OCI-LY7 (cell line): ENCODE measurements at regions of chr11 and their contacts with region 1.

Region 1: DNA sequence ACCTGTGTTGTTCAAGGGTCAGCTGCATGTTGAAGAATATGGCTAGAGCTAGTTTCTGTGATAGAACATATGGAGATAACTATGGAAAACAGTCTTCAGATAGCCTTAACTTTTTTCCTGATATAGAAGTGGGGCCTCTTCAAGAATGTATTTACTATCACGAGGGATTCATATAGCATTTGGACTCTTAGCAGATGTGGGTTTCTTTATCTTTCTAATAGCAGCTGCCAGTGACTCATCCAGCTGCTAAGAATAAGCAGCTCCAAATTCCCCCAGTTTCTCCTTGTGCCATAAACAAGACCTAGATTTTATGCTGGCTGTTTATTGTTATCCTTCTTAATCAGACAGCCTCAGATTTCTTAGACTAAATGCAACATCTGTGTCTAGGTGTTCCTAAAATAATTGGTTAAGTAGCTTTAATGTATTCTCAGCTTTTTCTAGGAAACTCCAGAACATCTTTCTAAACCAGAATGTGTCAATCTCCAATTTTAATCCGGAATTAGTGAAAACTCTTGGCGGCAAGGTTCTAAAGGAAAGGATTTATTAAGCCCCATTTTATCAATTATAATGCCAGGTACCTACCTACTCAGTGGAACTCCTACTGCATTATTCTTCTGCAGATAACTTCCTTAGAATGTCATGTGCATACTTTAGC is 119.8 kb downstream of the CSTPP1 start:
- DNase-seq: no peak
- H3K4me3 ChIP-seq: no peak overlapping the region
- H3K27ac ChIP-seq: no peak overlapping the region
- H3K4me1 ChIP-seq: peaks cover 23% of the 10 kb centered on the region
- CTCF ChIP-seq: no peak

Region 2: DNA sequence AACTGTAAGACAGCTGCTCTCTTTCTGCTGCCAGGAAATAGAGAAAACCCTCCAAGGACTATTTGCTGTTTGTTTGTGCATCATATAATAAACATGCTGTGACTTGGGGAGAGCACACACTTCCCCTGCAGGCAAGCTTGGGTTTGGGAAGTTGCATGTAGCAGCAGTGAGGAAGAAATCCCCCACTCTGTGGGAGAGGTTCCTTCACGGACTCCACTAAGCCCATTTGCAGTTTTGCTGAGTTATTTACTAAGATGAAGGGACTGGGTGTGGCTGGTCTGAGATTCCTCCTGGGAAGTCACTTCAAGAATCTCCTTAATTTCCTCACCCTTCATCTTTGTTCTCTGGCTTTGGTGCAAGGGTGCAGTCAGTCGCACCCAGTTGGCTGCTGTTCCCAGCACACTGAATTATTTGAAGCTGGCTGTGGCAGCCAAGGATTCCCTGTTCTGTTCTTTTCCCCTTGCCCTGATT is 15.4 kb after region 1 on chr11:
- CTCF ChIA-PET with region 1: no interaction called
- POLR2A ChIA-PET with region 1: interaction called, 12 read pairs
- intact Hi-C with region 1: no loop called
- DNase-seq: no peak
- H3K4me3 ChIP-seq: no peak overlapping the region
- H3K27ac ChIP-seq: no peak overlapping the region
- H3K4me1 ChIP-seq: no peaks in the 10 kb centered on the region
- CTCF ChIP-seq: no peak